Pancreas (tissue), 10 donors: ENCODE measurements at regions of chr16 and their contacts with region 1.

Region 1: GRCh38 chr16:74852500-74852875 is 77.9 kb upstream of the FA2H start:
- DNase-seq: no peak
- ATAC-seq: no peak
- H3K4me3 ChIP-seq: no peak overlapping the region
- H3K27ac ChIP-seq: no peak overlapping the region
- H3K4me1 ChIP-seq: no peaks in the 10 kb centered on the region
- H3K27me3 ChIP-seq: no peaks in the 10 kb centered on the region
- CTCF ChIP-seq: no peak

Region 2: GRCh38 chr16:74718741-74719610 is 133.5 kb before region 1 on chr16:
- intact Hi-C with region 1: loop called in 1 of 3 experiments (anchors 10 kb)
- DNase-seq: peak in 1 of 6 donors; percentile 47
- ATAC-seq: no peak
- H3K4me3 ChIP-seq: no peak overlapping the region
- H3K27ac ChIP-seq: no peak overlapping the region
- H3K4me1 ChIP-seq: no peaks in the 10 kb centered on the region
- H3K27me3 ChIP-seq: no peaks in the 10 kb centered on the region
- CTCF ChIP-seq: no peak

Region 3: GRCh38 chr16:74743668-74744299 is 108.7 kb before region 1 on chr16:
- intact Hi-C with region 1: no loop called
- DNase-seq: peak; percentile 83 to 97 (median 96)
- ATAC-seq: peak; percentile 87 to 92 (median 90)
- H3K4me3 ChIP-seq: peak overlapping the region in 1 of 4 donors; percentile 19
- H3K27ac ChIP-seq: peak overlapping the region; percentile 79 to 93 (median 91)
- H3K4me1 ChIP-seq: peaks cover 0 to 16% (median 15%) of the 10 kb centered on the region in 3 donors
- H3K27me3 ChIP-seq: no peaks in the 10 kb centered on the region
- CTCF ChIP-seq: no peak

Region 4: DNA sequence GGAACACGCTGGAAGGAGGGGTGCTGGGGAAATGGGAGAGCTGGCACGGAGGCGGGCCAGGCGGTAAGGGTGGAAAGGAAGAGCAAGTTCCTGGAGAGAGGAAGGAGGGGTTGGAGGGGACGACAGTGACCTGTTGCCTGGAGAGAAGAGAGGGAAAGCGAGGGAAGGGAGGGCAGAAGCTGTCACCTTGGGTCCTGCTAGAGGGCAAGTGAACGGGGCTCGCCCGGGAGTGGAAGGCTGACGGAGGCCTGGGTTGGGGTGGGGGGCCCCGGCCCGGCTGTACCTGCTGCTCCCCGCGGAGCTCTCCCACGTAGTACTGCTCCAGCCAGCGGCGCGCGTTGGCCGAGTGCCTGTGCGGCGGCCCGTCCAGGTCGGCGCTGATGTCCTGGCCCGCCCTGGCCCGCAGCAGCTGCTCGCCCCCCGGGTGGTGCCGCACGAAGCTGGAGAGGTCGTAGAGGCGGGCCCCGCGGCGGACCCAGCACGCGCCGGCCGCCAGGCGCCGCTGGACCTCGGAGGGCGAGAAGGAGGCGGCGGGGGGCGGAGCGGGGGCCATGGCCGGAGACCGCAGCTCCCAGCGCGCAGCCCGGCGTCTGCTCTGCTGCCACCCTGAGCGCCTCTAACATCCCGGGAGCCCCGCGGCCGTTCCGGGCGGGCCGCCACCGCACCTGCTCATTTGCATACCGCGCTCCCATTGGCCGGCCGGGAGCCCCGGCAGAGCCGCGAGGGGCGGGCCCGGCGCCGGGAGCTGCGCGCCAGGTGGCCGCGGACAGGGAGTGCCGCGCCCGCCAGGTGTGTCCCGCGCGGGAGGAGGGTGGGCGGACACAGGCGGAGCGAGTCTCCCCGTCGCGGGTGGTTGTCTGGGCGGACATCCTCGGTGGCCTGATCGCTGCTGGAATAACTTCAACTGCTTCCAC is 78.0 kb before region 1 on chr16 and contains the start of gene FA2H:
- intact Hi-C with region 1: no loop called
- DNase-seq: peak; percentile 92 to 98 (median 96)
- ATAC-seq: peak; percentile 96 to 98 (median 98)
- H3K4me3 ChIP-seq: peak within 1 kb of the TSS; percentile 58 to 78 (median 74)
- H3K27ac ChIP-seq: peak within 1 kb of the TSS; percentile 72 to 83 (median 80)
- H3K4me1 ChIP-seq: no peaks in the 10 kb centered on the region
- H3K27me3 ChIP-seq: no peaks in the 10 kb centered on the region
- CTCF ChIP-seq: peak in 3 of 4 donors; percentile 18 to 40 (median 24)
- total RNA-seq, gene FA2H: 2.2 to 6.4 (median 3.5) TPM

Region 5: GRCh38 chr16:74936902-74937560 is 84.5 kb after region 1 on chr16:
- intact Hi-C with region 1: no loop called
- DNase-seq: no peak
- ATAC-seq: peak in 2 of 4 donors; percentile 44 to 63
- H3K4me3 ChIP-seq: no peak overlapping the region
- H3K27ac ChIP-seq: no peak overlapping the region
- H3K4me1 ChIP-seq: no peaks in the 10 kb centered on the region
- H3K27me3 ChIP-seq: no peaks in the 10 kb centered on the region
- CTCF ChIP-seq: no peak